Thyroid gland (tissue), 4 donors: ENCODE measurements at regions of chr2 and their contacts with region 1.

Region 1: GRCh38 chr2:119826370-119826961 is 66.7 kb downstream of the PTPN4 start:
- DNase-seq: peak; percentile 14 to 20
- H3K4me3 ChIP-seq: no peak overlapping the region
- H3K27ac ChIP-seq: no peak overlapping the region
- H3K4me1 ChIP-seq: peaks cover 0 to 11% of the 10 kb centered on the region in 2 donors
- H3K27me3 ChIP-seq: no peaks in the 10 kb centered on the region
- CTCF ChIP-seq: peak in 5 of 6 experiments; percentile 16 to 48 (median 27)
- POLR2A ChIP-seq: no peak

Region 2: GRCh38 chr2:119694845-119695521 is 131.5 kb before region 1 on chr2:
- intact Hi-C with region 1: loop called (anchors 10 kb)
- DNase-seq: peak; percentile 40 to 42
- H3K4me3 ChIP-seq: no peak overlapping the region
- H3K27ac ChIP-seq: peak overlapping the region in 2 of 3 donors; percentile 7 to 34
- H3K4me1 ChIP-seq: peaks cover 25 to 48% of the 10 kb centered on the region in 2 donors
- H3K27me3 ChIP-seq: no peaks in the 10 kb centered on the region
- CTCF ChIP-seq: no peak
- POLR2A ChIP-seq: no peak

Region 3: GRCh38 chr2:119759451-119760236 is 66.8 kb before region 1 on chr2 and contains the start of gene PTPN4:
- intact Hi-C with region 1: loop called (anchors 10 kb)
- DNase-seq: peak; percentile 97
- H3K4me3 ChIP-seq: peak within 1 kb of the TSS; percentile 68 to 84 (median 75)
- H3K27ac ChIP-seq: peak within 1 kb of the TSS; percentile 80 to 97 (median 95)
- H3K4me1 ChIP-seq: peaks cover 15 to 23% of the 10 kb centered on the region in 2 donors
- H3K27me3 ChIP-seq: no peaks in the 10 kb centered on the region
- CTCF ChIP-seq: no peak
- POLR2A ChIP-seq: peak; percentile 73 to 94
- total RNA-seq, gene PTPN4: 79.1 to 131 (median 114) TPM